CD4-positive, alpha-beta memory T cell (primary cell): ENCODE measurements at regions of chr12 and their contacts with region 1.

Region 1: DNA sequence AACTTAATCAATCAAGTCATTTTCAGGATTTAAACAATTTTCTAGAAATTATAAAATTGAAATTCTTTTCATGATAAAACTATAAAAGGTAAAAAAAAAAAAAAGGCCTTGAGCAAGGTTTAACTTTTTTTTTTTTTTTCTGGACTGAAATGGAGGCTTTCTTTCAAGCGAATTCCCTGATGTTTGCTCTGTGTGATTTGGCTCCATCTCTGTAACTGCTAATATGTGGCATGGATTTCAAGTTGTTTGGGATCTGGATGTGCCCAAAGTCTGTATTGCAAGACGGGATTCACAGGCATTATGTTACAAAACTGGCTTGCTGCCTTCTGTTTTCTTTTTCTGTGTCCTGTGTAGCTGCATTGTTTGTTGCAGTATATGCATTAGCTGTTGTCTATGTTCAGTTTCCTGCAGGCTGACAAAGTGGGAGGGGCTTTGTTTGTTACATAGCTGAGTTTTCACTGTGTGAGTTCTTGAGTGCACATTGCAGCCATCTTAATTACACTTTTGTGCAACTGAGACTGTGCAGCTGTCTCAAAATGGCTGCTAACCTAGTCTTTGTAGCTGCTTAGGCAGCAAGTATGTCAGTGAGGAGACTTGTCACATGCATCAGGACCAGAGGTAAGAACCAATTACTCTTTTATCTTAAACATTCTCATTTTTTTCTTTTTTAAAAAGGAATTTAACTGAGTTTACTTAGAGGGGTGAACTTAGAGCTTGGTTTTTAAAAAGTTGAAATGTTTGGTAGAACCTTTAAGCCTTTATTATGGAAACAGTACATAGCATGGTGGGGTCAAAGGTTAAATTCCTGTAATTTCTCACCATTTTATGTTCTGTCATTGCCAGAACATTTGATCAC is 19.5 kb downstream of the ATF7IP start:
- DNase-seq: peak; percentile 81 to 87 (median 86)
- H3K4me3 ChIP-seq: peak overlapping the region in 1 of 2 donors; percentile 41
- H3K4me3 Mint-ChIP-seq: peak overlapping the region; percentile 64 to 92 (median 78)
- H3K27ac ChIP-seq: peak overlapping the region; percentile 74
- H3K27ac Mint-ChIP-seq: peak overlapping the region; percentile 93 to 97 (median 94)
- H3K4me1 ChIP-seq: peaks cover 73% of the 10 kb centered on the region
- H3K4me1 Mint-ChIP-seq: peaks cover 42 to 67% (median 57%) of the 10 kb centered on the region in 4 donors
- H3K27me3 ChIP-seq: no peaks in the 10 kb centered on the region
- H3K27me3 Mint-ChIP-seq: no peaks in the 10 kb centered on the region

Region 2: DNA sequence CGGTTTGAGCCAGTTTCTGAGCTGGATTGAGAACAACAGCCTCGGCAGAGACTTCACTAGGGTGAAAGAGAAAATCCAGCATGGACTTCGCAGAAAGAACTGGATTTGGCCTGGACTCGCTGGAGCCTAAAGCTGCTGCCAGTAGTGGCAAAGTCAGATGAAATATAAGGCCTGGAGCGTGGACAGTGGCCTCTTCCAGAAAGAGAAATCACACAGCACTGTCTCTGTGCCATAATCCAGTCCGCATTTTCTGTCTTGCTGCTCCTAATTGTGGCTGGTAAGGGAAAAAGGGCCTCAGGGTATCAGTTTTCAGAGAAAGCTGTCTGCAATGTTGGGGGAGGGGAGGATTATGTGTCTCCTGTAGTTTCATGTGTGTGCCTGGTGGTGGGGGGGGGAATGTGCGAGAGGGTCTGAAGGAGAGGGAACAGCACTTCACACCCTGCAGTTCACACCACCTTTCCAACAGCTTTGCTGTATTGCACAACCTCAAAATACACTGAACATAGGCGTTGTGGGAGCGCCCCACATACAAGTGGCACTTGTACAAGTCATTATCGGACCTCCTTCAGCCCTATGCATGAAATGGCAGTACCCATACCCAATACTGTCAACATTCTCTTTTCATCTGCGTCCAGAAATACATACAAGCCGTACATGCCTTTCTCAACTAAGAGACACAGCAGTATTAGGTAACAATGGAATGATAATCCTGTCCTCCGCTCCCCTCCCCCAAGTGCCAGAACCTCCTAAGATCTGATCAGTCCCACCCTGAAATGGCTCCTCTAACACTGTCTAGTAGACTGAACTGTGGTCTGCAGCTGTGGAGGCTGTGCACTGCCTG is 127.1 kb before region 1 on chr12:
- CTCF ChIA-PET with region 1: interaction called, 9 read pairs
- POLR2A ChIA-PET with region 1: interaction called, 26 read pairs
- intact Hi-C with region 1: loop called (anchors 1 kb)
- DNase-seq: peak; percentile 81 to 92 (median 84)
- H3K4me3 ChIP-seq: peak overlapping the region; percentile 1 to 31
- H3K4me3 Mint-ChIP-seq: peak overlapping the region; percentile 75 to 91 (median 84)
- H3K27ac ChIP-seq: peak overlapping the region; percentile 49
- H3K27ac Mint-ChIP-seq: peak overlapping the region; percentile 95 to 99 (median 98)
- H3K4me1 ChIP-seq: peaks cover 44% of the 10 kb centered on the region
- H3K4me1 Mint-ChIP-seq: peaks cover 35 to 57% (median 42%) of the 10 kb centered on the region in 4 donors
- H3K27me3 ChIP-seq: no peaks in the 10 kb centered on the region
- H3K27me3 Mint-ChIP-seq: no peaks in the 10 kb centered on the region

Region 3: DNA sequence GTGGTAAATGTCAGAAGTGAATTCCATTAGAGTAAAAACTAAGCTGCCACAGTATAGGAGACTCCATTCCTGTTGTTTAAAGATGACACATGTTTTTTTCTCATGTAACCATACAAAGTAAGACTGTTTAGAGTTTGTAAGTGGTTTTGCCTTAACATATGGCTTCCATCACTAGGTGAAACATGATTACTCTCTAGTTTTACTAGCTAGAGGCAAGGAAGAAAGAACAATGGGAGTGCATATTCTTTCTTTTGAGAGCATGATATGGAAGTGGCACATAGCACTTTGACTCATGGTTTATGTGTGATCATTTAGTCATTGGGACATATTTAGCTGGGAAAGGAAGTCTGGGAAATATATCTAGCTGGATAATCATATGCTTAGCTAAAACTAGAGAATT is 11.8 kb before region 1 on chr12:
- CTCF ChIA-PET with region 1: interaction called, 20 read pairs
- POLR2A ChIA-PET with region 1: interaction called, 115 read pairs
- intact Hi-C with region 1: loop called (anchors 1 kb)
- DNase-seq: no peak
- H3K4me3 ChIP-seq: no peak overlapping the region
- H3K4me3 Mint-ChIP-seq: peak overlapping the region; percentile 3 to 86 (median 53)
- H3K27ac ChIP-seq: peak overlapping the region; percentile 36
- H3K27ac Mint-ChIP-seq: peak overlapping the region; percentile 10 to 83 (median 65)
- H3K4me1 ChIP-seq: peaks cover 84% of the 10 kb centered on the region
- H3K4me1 Mint-ChIP-seq: peaks cover 42 to 69% (median 56%) of the 10 kb centered on the region in 4 donors
- H3K27me3 ChIP-seq: no peaks in the 10 kb centered on the region
- H3K27me3 Mint-ChIP-seq: no peaks in the 10 kb centered on the region

Region 4: GRCh38 chr12:14410841-14411569 is 26.0 kb after region 1 on chr12:
- CTCF ChIA-PET with region 1: interaction called, 22 read pairs
- POLR2A ChIA-PET with region 1: interaction called, 91 read pairs
- intact Hi-C with region 1: loop called (anchors 1 kb)
- DNase-seq: peak; percentile 50 to 74 (median 65)
- H3K4me3 ChIP-seq: no peak overlapping the region
- H3K4me3 Mint-ChIP-seq: peak overlapping the region in 6 of 8 donors; percentile 31 to 83 (median 58)
- H3K27ac ChIP-seq: no peak overlapping the region
- H3K27ac Mint-ChIP-seq: peak overlapping the region; percentile 5 to 84 (median 32)
- H3K4me1 ChIP-seq: peaks cover 94% of the 10 kb centered on the region
- H3K4me1 Mint-ChIP-seq: peaks cover 50 to 72% (median 60%) of the 10 kb centered on the region in 4 donors
- H3K27me3 ChIP-seq: no peaks in the 10 kb centered on the region
- H3K27me3 Mint-ChIP-seq: no peaks in the 10 kb centered on the region

Region 5: DNA sequence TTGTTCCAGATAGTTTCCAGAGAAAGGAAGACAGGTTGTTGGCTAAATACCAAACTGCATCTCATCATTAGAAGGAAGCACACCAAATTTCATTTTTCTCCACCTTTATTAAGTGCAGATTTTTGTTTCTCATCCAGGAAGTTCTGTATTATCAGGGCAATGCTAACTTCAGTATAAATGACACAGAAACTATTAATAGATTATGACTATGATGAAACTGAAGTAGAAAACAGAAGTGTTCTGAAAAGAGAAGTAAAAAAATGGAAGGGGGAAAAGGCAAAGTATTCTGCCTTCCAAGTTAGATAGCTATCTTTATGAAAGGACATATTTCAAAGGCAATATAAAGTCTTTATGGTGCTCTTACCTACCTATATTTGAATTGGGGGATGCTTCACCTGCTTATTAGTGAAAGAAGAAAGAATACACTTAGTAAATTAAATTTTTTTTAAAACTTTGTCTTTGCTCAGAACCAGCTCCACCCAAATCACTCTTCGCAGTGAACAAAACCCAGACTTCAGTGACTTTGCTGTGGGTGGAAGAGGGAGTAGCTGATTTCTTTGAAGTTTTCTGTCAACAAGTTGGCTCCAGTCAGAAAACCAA is 1161.2 kb after region 1 on chr12:
- CTCF ChIA-PET with region 1: no interaction called
- POLR2A ChIA-PET with region 1: no interaction called
- intact Hi-C with region 1: loop called (anchors 10 kb)
- DNase-seq: peak; percentile 65 to 74 (median 68)
- H3K4me3 ChIP-seq: no peak overlapping the region
- H3K4me3 Mint-ChIP-seq: peak overlapping the region; percentile 22 to 80 (median 59)
- H3K27ac ChIP-seq: peak overlapping the region; percentile 30
- H3K27ac Mint-ChIP-seq: peak overlapping the region; percentile 85 to 98 (median 88)
- H3K4me1 ChIP-seq: peaks cover 50% of the 10 kb centered on the region
- H3K4me1 Mint-ChIP-seq: peaks cover 35 to 62% (median 42%) of the 10 kb centered on the region in 4 donors
- H3K27me3 ChIP-seq: no peaks in the 10 kb centered on the region
- H3K27me3 Mint-ChIP-seq: no peaks in the 10 kb centered on the region